CD4-positive, alpha-beta T cell (primary cell): ENCODE measurements at regions of chr4 and their contacts with region 1.

Region 1: DNA sequence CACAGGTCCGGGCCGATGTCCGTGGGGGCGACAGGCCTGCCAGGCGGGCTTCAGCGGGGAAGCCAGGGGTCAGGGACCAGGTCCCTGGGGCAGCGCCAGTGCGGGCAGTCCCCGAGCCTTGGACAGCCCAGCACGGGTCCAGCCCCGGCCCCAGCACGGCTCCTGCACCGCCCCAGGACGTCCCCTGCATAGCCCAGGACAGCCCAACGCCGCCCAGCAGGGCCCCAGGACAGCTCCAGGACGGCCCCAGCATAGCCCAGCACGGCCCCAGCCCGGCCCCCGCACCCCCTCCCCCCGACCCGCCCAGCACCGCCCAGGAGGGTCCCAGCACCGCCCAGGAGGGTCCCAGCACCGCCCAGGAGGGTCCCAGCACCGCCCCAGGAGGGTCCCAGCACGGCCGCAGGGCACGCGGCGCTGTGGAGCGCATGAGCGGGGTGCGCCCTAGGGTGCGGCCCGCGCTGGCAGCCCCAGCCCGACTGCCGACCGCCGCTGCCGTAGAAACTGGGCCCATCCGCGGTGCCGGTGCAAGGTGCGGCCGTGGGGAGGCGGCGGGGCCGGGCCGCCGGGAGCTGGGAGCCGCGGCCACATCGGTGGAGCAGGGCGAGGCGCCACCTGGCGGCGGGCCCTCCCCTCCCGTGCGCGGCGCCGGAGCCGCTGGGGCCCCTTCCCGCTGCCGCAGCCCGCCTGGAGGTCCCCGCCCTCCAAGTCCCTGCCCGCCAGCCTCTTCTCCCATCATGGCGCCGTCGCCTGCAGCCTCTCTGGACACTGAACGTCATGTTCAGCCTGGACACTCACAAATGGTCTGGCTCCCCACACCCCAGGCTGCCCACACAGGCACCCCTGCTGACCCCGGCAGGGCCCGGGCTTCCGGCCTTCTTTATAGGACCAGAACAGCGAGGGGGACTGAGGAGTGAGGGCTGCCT is 106.8 kb upstream of the NKX1-1 start:
- DNase-seq: peak in 13 of 14 experiments; percentile 14 to 78 (median 43)
- ATAC-seq: peak; percentile 63
- H3K4me3 ChIP-seq: no peak overlapping the region
- H3K4me3 Mint-ChIP-seq: no peak overlapping the region
- H3K27ac ChIP-seq: no peak overlapping the region
- H3K27ac Mint-ChIP-seq: no peak overlapping the region
- H3K4me1 ChIP-seq: peaks cover 4% of the 10 kb centered on the region
- H3K4me1 Mint-ChIP-seq: no peaks in the 10 kb centered on the region
- H3K27me3 ChIP-seq: peaks cover 7 to 19% of the 10 kb centered on the region in 2 experiments
- H3K27me3 Mint-ChIP-seq: peaks cover 18% of the 10 kb centered on the region
- CTCF ChIP-seq: peak; percentile 37

Region 2: DNA sequence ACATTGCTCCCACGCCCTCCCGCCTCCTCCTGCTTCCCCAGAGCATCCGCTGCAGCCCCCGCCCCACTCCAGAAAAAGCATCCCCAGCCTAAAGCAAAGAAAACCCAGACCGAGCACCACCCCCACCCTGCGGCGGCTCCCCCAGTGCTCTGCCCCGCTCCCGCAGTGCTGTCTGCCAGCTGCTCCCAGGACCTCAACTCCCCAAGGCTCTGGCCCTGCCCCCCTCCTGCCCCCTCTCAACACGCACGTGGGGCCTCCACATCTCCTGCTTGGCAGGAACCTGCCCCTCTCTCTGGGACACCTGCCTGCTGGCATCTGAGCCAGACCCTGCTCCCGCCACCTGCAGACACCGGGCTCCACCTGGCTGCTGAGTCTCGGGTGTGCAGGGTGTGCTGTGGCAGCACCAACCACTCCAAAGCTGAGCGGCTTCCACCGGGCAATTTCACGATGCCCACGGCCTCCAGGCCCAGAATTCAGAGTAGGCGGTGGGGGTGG is 91.8 kb after region 1 on chr4:
- CTCF ChIA-PET with region 1: no interaction called
- POLR2A ChIA-PET with region 1: no interaction called
- intact Hi-C with region 1: loop called in 1 of 2 experiments (anchors 5 kb)
- DNase-seq: peak in 11 of 14 experiments; percentile 39 to 87 (median 63)
- ATAC-seq: peak; percentile 80
- H3K4me3 ChIP-seq: peak overlapping the region; percentile 43
- H3K4me3 Mint-ChIP-seq: peak overlapping the region; percentile 74
- H3K27ac ChIP-seq: peak overlapping the region in 1 of 2 donors; percentile 29
- H3K27ac Mint-ChIP-seq: peak overlapping the region; percentile 85
- H3K4me1 ChIP-seq: peaks cover 46% of the 10 kb centered on the region
- H3K4me1 Mint-ChIP-seq: peaks cover 21% of the 10 kb centered on the region
- H3K27me3 ChIP-seq: no peaks in the 10 kb centered on the region
- H3K27me3 Mint-ChIP-seq: no peaks in the 10 kb centered on the region
- CTCF ChIP-seq: peak; percentile 52

Region 3: DNA sequence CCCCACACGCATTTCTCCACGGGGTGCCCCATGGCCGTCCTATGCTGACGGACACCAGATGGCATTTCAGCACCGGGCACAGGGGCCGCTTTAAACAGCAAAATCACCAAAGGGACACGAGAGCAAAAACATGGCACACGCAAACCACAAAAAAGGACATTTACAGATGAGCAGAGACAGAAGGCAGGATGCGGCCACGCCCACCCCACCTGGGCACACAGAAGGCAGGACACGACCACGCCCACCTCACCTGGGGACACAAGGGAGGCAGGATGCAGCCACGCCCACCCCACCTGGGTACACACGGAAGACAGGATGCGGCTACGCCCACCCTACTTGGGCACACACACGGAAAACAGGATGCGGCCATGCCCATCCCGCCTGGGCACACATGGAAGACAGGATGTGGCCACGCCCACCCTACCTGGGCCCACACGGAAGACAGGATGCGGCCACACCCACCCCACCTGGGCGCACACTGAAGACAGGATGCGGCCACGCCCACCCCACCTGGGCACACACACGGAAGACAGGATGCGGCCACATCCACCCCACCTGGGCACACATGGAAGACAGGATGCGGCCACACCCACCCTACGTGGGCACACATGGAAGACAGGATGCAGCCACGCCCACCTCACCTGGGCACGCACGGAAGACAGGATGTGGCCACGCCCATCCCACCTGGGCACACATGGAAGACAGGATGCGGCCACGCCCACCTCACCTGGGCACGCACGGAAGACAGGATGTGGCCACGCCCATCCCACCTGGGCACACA is 102.0 kb after region 1 on chr4:
- CTCF ChIA-PET with region 1: no interaction called
- POLR2A ChIA-PET with region 1: no interaction called
- intact Hi-C with region 1: no loop called
- DNase-seq: peak in 5 of 14 experiments; percentile 10 to 82 (median 55)
- ATAC-seq: peak; percentile 12
- H3K4me3 ChIP-seq: no peak overlapping the region
- H3K4me3 Mint-ChIP-seq: peak overlapping the region; percentile 55
- H3K27ac ChIP-seq: peak overlapping the region in 1 of 2 donors; percentile 52
- H3K27ac Mint-ChIP-seq: peak overlapping the region; percentile 67
- H3K4me1 ChIP-seq: peaks cover 36% of the 10 kb centered on the region
- H3K4me1 Mint-ChIP-seq: peaks cover 30% of the 10 kb centered on the region
- H3K27me3 ChIP-seq: no peaks in the 10 kb centered on the region
- H3K27me3 Mint-ChIP-seq: no peaks in the 10 kb centered on the region
- CTCF ChIP-seq: no peak

Region 4: GRCh38 chr4:1842993-1843448 is 330.0 kb after region 1 on chr4:
- CTCF ChIA-PET with region 1: no interaction called
- POLR2A ChIA-PET with region 1: no interaction called
- intact Hi-C with region 1: no loop called
- DNase-seq: no peak
- ATAC-seq: no peak
- H3K4me3 ChIP-seq: no peak overlapping the region
- H3K4me3 Mint-ChIP-seq: no peak overlapping the region
- H3K27ac ChIP-seq: no peak overlapping the region
- H3K27ac Mint-ChIP-seq: no peak overlapping the region
- H3K4me1 ChIP-seq: peaks cover 3% of the 10 kb centered on the region
- H3K4me1 Mint-ChIP-seq: no peaks in the 10 kb centered on the region
- H3K27me3 ChIP-seq: no peaks in the 10 kb centered on the region
- H3K27me3 Mint-ChIP-seq: no peaks in the 10 kb centered on the region
- CTCF ChIP-seq: no peak